ENCODE measurements at regions of chr1 and their contacts with region 1.

Region 1: DNA sequence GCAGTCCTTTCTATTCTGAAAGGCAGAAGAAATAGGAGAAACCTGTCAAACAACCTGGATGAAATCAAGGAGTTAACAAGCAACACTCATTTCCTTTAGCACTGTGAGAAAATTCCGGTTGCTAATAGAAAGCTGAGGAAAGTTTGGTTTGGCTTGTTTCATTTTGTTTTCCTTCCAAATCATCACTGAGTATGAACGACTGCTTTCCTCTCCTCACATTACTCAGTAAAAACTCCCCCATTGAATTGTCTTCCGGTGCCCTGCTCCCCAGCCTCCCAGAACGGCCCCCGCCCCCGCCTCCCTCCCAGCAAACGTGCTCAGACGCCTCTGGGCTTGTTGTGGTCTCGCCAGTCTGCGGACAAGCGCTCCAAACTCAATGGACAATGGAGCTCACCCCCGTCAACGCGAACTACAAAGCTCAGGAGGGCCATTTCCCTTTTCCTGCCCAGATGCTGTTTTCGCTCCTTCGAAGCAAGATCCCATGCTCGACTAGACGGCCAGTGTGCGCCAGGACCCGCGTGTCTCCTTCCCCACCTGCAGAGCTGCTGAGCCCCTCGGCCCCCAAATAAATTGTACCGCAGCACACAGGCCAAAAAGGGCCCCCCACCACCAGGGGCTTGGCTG is 747 bp downstream of the STX6 start:
- DNase-seq: peak; percentile 53
- H3K4me3 Mint-ChIP-seq: peak overlapping the region; percentile 93
- H3K27ac Mint-ChIP-seq: peak overlapping the region; percentile 93
- H3K4me1 Mint-ChIP-seq: peaks cover 49% of the 10 kb centered on the region
- H3K27me3 Mint-ChIP-seq: peaks cover 19% of the 10 kb centered on the region

Region 2: GRCh38 chr1:180956051-180956501 is 65.8 kb before region 1 on chr1:
- CTCF ChIA-PET with region 1: no interaction called
- POLR2A ChIA-PET with region 1: no interaction called
- DNase-seq: no peak
- H3K4me3 Mint-ChIP-seq: no peak overlapping the region
- H3K27ac Mint-ChIP-seq: no peak overlapping the region
- H3K4me1 Mint-ChIP-seq: peaks cover 7% of the 10 kb centered on the region
- H3K27me3 Mint-ChIP-seq: no peaks in the 10 kb centered on the region

Region 3: DNA sequence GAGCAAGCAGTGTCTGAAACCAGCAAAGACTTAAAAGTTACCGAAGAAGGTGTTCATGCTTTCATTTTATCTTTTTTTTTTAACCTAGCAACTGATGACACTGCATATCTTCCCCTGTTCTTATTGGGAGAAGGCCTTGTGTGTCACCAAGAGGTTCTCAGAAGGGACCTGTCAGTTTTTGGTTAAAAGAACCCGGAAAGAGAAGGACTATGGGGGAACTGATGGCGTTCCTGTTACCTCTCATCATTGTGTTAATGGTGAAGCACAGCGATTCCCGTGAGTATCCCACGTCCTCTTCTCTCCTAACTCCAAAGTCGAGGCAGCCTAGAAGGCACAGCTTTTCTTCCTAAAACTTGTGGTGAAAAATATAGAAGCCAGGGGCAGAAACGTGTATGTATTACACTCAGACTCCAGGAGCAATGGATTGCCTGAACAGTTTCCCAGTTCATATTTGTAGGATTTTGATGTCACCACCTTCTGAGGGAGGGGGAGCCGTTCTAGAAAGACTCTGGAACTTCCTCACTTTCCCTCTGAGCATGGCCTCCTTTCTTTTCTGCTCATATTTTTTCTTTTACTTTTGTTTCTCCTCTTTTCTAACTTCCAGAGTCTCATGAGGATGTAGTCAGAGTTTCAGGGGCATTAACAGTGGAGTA is 12.0 kb after region 1 on chr1 and contains the start of gene MR1:
- CTCF ChIA-PET with region 1: interaction called, 10 read pairs
- POLR2A ChIA-PET with region 1: interaction called, 3 read pairs
- DNase-seq: peak; percentile 67
- H3K4me3 Mint-ChIP-seq: peak within 1 kb of the TSS; percentile 92
- H3K27ac Mint-ChIP-seq: peak within 1 kb of the TSS; percentile 98
- H3K4me1 Mint-ChIP-seq: peaks cover 55% of the 10 kb centered on the region
- H3K27me3 Mint-ChIP-seq: no peaks in the 10 kb centered on the region
- total RNA-seq, gene MR1: 37.4 to 38.7 TPM

Measured in activated CD4-positive, alpha-beta T cell treated with anti-CD3 and anti-CD28 coated beads, Interleukin-2, amount 10 ng/mL, durations not matched to agents 7 days and 5 days (primary cell).